CD8-positive, alpha-beta T cell (primary cell): ENCODE measurements at regions of chr10 and their contacts with region 1.

Region 1: DNA sequence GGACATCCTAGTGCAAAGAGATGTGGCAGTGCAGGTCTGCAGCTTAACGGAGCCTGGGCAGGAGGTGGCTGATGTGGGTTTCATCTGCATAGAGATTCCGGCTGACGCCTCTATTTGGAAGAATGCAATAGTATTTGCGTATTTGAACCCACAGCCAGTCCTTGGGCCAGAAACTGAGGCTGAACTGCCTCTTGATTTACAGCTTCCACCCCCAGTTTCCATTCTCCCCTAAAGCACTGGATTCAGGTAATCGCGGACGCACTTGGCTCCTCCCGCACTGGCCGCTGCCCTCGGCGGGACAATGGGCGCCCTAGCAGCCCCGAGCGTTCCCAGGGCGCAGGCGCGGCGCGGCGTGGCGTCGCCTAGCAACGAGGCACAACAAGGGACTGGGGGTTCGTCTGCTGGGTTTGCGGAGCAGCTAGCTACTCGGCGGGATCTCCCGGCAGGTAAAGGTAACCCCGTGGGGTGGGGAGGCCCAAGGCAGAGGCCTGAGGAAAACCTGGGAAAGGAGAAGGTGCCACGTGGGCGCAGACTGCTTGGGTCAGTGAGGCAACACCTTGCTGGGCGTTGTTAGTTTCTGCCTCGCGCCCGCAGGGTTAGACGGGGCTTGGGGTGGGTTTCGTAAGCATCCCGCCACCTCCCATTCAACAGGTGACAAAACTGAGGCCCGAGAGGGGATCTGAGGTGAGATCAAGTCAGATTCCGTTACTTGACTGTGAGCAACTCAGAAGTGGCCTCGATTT is at the start of gene ARMC3:
- DNase-seq: peak; percentile 36 to 89 (median 75)
- ATAC-seq: peak; percentile 90
- H3K4me3 ChIP-seq: peak within 1 kb of the TSS; percentile 38 to 61
- H3K4me3 Mint-ChIP-seq: no peak within 1 kb of the TSS
- H3K27ac ChIP-seq: peak within 1 kb of the TSS in 1 of 2 experiments; percentile 15
- H3K27ac Mint-ChIP-seq: no peak within 1 kb of the TSS
- H3K4me1 ChIP-seq: peaks cover 11% of the 10 kb centered on the region
- H3K4me1 Mint-ChIP-seq: no peaks in the 10 kb centered on the region
- H3K27me3 ChIP-seq: peaks cover 3% of the 10 kb centered on the region in 2 experiments
- H3K27me3 Mint-ChIP-seq: peaks cover 3% of the 10 kb centered on the region
- CTCF ChIP-seq: no peak
- total RNA-seq, gene ARMC3: not detected

Region 2: GRCh38 chr10:22589851-22590514 is 337.8 kb before region 1 on chr10:
- CTCF ChIA-PET with region 1: no interaction called
- POLR2A ChIA-PET with region 1: no interaction called
- intact Hi-C with region 1: loop called in 1 of 2 experiments (anchors 5 kb)
- DNase-seq: no peak
- ATAC-seq: no peak
- H3K4me3 ChIP-seq: no peak overlapping the region
- H3K4me3 Mint-ChIP-seq: no peak overlapping the region
- H3K27ac ChIP-seq: peak overlapping the region in 1 of 2 experiments; percentile 16
- H3K27ac Mint-ChIP-seq: peak overlapping the region; percentile 73
- H3K4me1 ChIP-seq: peaks cover 42% of the 10 kb centered on the region
- H3K4me1 Mint-ChIP-seq: peaks cover 69% of the 10 kb centered on the region
- H3K27me3 ChIP-seq: no peaks in the 10 kb centered on the region
- H3K27me3 Mint-ChIP-seq: no peaks in the 10 kb centered on the region
- CTCF ChIP-seq: no peak

Region 3: DNA sequence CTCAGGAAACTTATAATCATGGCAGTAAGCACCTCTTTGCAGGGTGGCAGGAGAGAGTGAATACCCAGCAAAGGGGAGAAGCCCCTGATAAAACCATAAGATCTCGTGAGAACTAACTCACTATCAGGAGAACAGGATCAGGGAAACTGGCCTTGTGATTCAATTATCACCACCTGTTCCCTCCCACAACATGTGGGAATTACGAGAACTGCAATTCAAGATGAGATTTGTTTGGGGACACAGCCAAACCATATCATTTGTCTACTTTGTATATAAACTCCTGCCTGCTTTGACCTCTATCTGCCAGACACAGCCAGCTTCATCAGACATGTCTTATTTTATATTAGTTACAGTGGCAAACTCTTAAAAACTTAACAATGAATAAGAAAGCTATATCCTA is 50.5 kb after region 1 on chr10:
- CTCF ChIA-PET with region 1: interaction called, 4 read pairs
- POLR2A ChIA-PET with region 1: no interaction called
- intact Hi-C with region 1: loop called in 1 of 2 experiments (anchors 5 kb)
- DNase-seq: no peak
- ATAC-seq: no peak
- H3K4me3 ChIP-seq: no peak overlapping the region
- H3K4me3 Mint-ChIP-seq: no peak overlapping the region
- H3K27ac ChIP-seq: no peak overlapping the region
- H3K27ac Mint-ChIP-seq: no peak overlapping the region
- H3K4me1 ChIP-seq: no peaks in the 10 kb centered on the region
- H3K4me1 Mint-ChIP-seq: no peaks in the 10 kb centered on the region
- H3K27me3 ChIP-seq: peaks cover 0 to 2% of the 10 kb centered on the region in 2 experiments
- H3K27me3 Mint-ChIP-seq: peaks cover 5% of the 10 kb centered on the region
- CTCF ChIP-seq: no peak